AG04450 (cell line): ENCODE measurements at regions of chr4 and their contacts with region 1.

Region 1: DNA sequence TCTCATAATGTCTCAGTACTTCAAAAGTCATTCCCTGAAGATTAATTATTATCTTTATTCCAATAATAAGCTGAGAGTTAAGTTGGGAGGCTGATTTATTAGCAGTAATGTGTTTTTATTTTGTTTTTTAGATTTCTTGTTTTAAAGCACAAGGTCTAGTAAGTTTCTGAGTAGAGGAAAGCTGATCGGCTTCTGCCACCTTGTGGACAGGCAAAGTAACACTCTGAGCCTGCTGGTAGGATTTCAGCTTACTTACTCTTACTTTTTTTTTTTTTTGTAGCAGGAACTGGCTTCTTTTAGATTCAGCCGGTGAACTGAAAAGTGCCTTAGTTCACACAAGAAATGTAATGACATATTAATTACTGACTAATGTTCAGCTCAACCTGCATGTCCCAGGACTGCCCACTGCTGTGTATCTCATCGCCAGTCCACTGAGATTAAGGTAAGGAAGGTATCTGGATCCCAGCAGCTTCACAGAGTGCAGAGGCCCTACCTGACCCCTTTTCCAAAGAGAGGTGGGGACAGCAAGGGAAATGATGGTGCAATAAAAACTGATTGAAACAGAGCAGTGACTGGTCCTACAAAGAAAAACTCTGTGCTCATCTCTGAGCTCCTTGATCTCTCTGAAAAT is 126.5 kb downstream of the ADGRA3 start:
- DNase-seq: peak; percentile 72
- H3K4me3 ChIP-seq: no peak overlapping the region
- H3K27ac ChIP-seq: no peak overlapping the region
- H3K27me3 ChIP-seq: no peaks in the 10 kb centered on the region
- CTCF ChIP-seq: peak; percentile 91

Region 2: GRCh38 chr4:22237155-22237751 is 152.1 kb before region 1 on chr4:
- CTCF ChIA-PET with region 1: interaction called, 17 read pairs
- POLR2A ChIA-PET with region 1: no interaction called
- DNase-seq: no peak
- H3K4me3 ChIP-seq: no peak overlapping the region
- H3K27ac ChIP-seq: no peak overlapping the region
- H3K27me3 ChIP-seq: no peaks in the 10 kb centered on the region
- CTCF ChIP-seq: peak; percentile 48

Region 3: DNA sequence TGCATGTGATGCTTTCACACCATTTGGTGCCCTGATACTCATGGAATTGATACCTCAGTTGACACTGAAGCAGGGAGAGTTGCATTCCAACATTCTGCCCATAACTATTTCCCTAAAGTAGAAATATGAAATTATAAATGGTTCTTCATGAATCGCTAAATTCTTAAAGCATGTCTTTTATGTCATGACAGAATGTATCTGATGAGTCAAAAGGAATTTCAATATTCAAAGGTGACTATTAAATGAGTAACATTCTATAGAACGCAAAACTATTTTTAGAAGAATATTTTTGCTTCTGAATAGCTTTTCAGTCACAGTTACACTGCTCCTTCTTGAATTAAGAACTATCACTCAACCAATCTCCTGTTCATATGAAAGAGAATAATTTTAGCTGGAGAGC is 26.3 kb before region 1 on chr4:
- CTCF ChIA-PET with region 1: interaction called, 15 read pairs
- POLR2A ChIA-PET with region 1: no interaction called
- DNase-seq: no peak
- H3K4me3 ChIP-seq: no peak overlapping the region
- H3K27ac ChIP-seq: no peak overlapping the region
- H3K27me3 ChIP-seq: no peaks in the 10 kb centered on the region
- CTCF ChIP-seq: no peak

Region 4: DNA sequence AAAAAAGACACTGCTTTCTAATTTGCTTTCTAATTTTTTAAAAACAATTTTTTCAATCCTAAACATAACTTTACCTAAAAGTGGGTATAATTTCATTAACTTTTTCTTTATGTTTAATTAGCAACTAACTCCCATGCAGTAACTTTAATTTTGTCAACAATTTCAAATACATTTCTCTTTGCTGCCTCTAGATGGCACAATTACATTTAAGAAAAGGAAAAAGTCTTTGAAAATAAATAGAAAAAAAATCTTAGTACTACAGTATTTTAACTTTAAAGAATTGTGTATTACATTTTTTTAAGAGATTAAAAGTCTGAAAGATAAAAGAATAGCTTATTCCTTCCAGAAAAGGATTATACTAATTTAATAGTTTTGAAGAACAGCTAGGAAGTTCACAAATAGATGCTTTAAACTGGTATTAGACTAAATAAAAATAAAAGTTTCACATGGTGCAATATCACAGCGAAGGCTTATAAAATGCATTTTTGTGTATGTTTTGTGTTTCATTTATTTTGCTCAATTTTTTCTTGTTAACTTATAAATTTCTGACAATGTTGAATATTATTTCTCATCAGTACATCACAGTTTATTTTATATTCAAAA is 21.4 kb after region 1 on chr4:
- CTCF ChIA-PET with region 1: interaction called, 17 read pairs
- POLR2A ChIA-PET with region 1: no interaction called
- DNase-seq: no peak
- H3K4me3 ChIP-seq: no peak overlapping the region
- H3K27ac ChIP-seq: no peak overlapping the region
- H3K27me3 ChIP-seq: no peaks in the 10 kb centered on the region
- CTCF ChIP-seq: peak; percentile 56

Region 5: GRCh38 chr4:22607382-22607781 is 218.0 kb after region 1 on chr4:
- CTCF ChIA-PET with region 1: interaction called, 13 read pairs
- POLR2A ChIA-PET with region 1: no interaction called
- DNase-seq: peak; percentile 23
- H3K4me3 ChIP-seq: no peak overlapping the region
- H3K27ac ChIP-seq: no peak overlapping the region
- H3K27me3 ChIP-seq: no peaks in the 10 kb centered on the region
- CTCF ChIP-seq: peak; percentile 69